Right cardiac atrium (tissue), 5 donors: ENCODE measurements at regions of chr12 and their contacts with region 1.

Region 1: GRCh38 chr12:32365473-32366064 is 33.8 kb upstream of the FGD4 start:
- DNase-seq: peak in 1 of 3 donors; percentile 58
- ATAC-seq: peak; percentile 60 to 76
- H3K4me3 ChIP-seq: no peak overlapping the region
- H3K27ac ChIP-seq: no peak overlapping the region
- H3K4me1 ChIP-seq: no peaks in the 10 kb centered on the region
- H3K27me3 ChIP-seq: no peaks in the 10 kb centered on the region

Region 2: DNA sequence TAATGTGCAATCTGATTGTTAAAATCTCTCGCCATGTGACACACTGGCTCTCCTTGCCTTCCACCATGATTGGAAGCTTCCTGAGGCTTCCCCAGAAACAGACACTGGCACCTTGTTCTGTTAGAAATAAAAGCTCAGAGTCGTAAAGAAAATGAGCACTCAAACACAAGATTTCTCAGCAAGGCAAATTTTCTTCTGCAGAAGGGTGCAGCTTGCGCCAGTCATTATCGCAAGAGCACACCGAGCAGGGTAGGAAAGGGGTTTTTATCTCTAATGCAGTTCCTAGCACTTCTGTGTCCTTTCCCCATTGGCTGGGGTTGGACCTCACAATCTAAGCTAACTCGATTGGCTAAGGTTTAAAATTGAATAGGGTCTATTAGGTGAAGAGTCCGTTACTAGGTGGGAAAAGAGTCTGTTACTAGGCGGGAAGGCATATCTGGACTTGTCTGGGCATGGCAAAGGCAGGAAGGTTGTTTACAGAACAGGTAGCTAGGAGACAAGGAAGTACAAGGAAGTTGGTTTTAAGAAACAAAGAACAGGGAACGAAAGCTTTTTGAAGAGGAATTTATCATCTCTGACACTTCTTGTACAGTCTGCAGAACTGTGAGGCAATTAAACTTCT is 321.5 kb before region 1 on chr12:
- intact Hi-C with region 1: no loop called
- DNase-seq: no peak
- ATAC-seq: no peak
- H3K4me3 ChIP-seq: no peak overlapping the region
- H3K27ac ChIP-seq: no peak overlapping the region
- H3K4me1 ChIP-seq: no peaks in the 10 kb centered on the region
- H3K27me3 ChIP-seq: no peaks in the 10 kb centered on the region

Region 3: GRCh38 chr12:32083489-32083888 is 282.1 kb before region 1 on chr12:
- intact Hi-C with region 1: no loop called
- DNase-seq: no peak
- ATAC-seq: no peak
- H3K4me3 ChIP-seq: no peak overlapping the region
- H3K27ac ChIP-seq: no peak overlapping the region
- H3K4me1 ChIP-seq: no peaks in the 10 kb centered on the region
- H3K27me3 ChIP-seq: no peaks in the 10 kb centered on the region

Region 4: DNA sequence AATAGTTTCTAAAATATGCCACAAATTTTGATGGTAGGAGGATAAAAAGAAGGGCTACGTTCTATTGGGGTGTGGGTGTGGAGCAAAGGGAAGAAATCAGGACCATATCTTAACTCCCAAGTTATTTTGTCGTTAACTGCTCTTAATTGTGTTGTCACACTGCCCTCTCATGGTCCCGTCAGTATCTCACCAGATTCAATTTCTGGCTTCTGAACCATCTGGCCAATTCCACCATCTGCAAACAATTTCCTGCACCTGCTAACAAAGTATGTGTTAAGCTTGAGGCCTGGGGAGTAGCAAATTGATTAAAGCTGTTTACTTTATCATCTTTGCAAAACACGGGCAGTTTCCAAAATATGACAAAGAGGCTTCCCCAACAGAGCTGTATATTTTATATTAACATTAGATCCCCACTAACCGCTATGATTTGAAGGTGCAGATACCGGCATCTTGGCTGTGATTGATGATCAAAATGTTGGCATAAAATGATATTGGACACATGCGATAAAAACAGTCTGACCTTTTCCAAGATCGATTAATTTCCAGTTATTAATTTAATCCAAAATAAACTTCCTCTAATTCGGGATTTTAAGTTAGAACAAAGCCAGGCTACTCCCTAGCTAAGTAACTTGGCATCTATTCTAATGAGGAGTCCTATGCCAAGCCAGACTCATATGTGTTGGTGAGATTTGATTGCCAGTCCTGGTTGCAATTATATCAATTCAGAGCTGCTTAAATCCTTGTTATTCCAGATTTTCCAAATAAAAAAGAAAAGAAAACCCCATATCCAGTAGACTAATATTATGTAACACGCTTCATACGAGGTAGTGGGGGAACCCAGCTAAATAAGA is 306.6 kb after region 1 on chr12:
- intact Hi-C with region 1: loop called in 3 of 4 experiments (anchors 5 kb)
- DNase-seq: no peak
- ATAC-seq: peak; percentile 77 to 85
- H3K4me3 ChIP-seq: no peak overlapping the region
- H3K27ac ChIP-seq: no peak overlapping the region
- H3K4me1 ChIP-seq: no peaks in the 10 kb centered on the region
- H3K27me3 ChIP-seq: no peaks in the 10 kb centered on the region